GM12878 (cell line): ENCODE measurements at regions of chr22 and their contacts with region 1.

Region 1: GRCh38 chr22:22666307-22667091 is 22.1 kb downstream of the GGTLC2 start:
- DNase-seq: no peak
- ATAC-seq: peak; percentile 81
- H3K4me3 ChIP-seq: no peak overlapping the region
- H3K27ac ChIP-seq: no peak overlapping the region
- H3K4me1 ChIP-seq: peaks cover 5% of the 10 kb centered on the region; the same call in 1 of the 2 replicates
- H3K27me3 ChIP-seq: no peaks in the 10 kb centered on the region
- CTCF ChIP-seq: peak; percentile 44 to 67 (median 63)
- EP300 ChIP-seq: no peak
- POLR2A ChIP-seq: no peak
- RAD21 ChIP-seq: peak; percentile 72

Region 2: GRCh38 chr22:22479999-22480532 is 186.4 kb before region 1 on chr22:
- CTCF ChIA-PET with region 1: no interaction called
- POLR2A ChIA-PET with region 1: no interaction called
- RAD21 ChIA-PET with region 1: no interaction called
- SMC1A ChIA-PET with region 1: no interaction called
- in situ Hi-C with region 1: no loop called
- intact Hi-C with region 1: no loop called
- DNase-seq: no peak
- ATAC-seq: no peak
- H3K4me3 ChIP-seq: no peak overlapping the region
- H3K27ac ChIP-seq: no peak overlapping the region
- H3K4me1 ChIP-seq: no peaks in the 10 kb centered on the region
- H3K27me3 ChIP-seq: no peaks in the 10 kb centered on the region
- CTCF ChIP-seq: no peak
- EP300 ChIP-seq: no peak
- POLR2A ChIP-seq: no peak
- RAD21 ChIP-seq: no peak

Region 3: GRCh38 chr22:22655452-22656290 is 10.8 kb before region 1 on chr22:
- CTCF ChIA-PET with region 1: interaction called, 11 read pairs
- POLR2A ChIA-PET with region 1: no interaction called
- RAD21 ChIA-PET with region 1: interaction called, 5 read pairs
- SMC1A ChIA-PET with region 1: interaction called, 4 read pairs
- in situ Hi-C with region 1: no loop called
- intact Hi-C with region 1: no loop called
- DNase-seq: no peak
- ATAC-seq: no peak
- H3K4me3 ChIP-seq: no peak overlapping the region
- H3K27ac ChIP-seq: no peak overlapping the region
- H3K4me1 ChIP-seq: no peaks in the 10 kb centered on the region
- H3K27me3 ChIP-seq: no peaks in the 10 kb centered on the region
- CTCF ChIP-seq: no peak
- EP300 ChIP-seq: no peak
- POLR2A ChIP-seq: no peak
- RAD21 ChIP-seq: no peak

Region 4: GRCh38 chr22:22681221-22681739 is 14.8 kb after region 1 on chr22:
- CTCF ChIA-PET with region 1: interaction called, 46 read pairs
- POLR2A ChIA-PET with region 1: no interaction called
- RAD21 ChIA-PET with region 1: interaction called, 23 read pairs
- SMC1A ChIA-PET with region 1: interaction called, 23 read pairs
- in situ Hi-C with region 1: no loop called
- intact Hi-C with region 1: no loop called
- DNase-seq: no peak
- ATAC-seq: no peak
- H3K4me3 ChIP-seq: no peak overlapping the region
- H3K27ac ChIP-seq: no peak overlapping the region
- H3K4me1 ChIP-seq: peaks cover 17% of the 10 kb centered on the region
- H3K27me3 ChIP-seq: no peaks in the 10 kb centered on the region
- CTCF ChIP-seq: no peak
- EP300 ChIP-seq: no peak
- POLR2A ChIP-seq: no peak
- RAD21 ChIP-seq: no peak

Region 5: GRCh38 chr22:22687638-22688500 is 21.4 kb after region 1 on chr22:
- CTCF ChIA-PET with region 1: interaction called, 46 read pairs
- POLR2A ChIA-PET with region 1: no interaction called
- RAD21 ChIA-PET with region 1: interaction called, 23 read pairs
- SMC1A ChIA-PET with region 1: interaction called, 23 read pairs
- in situ Hi-C with region 1: no loop called
- intact Hi-C with region 1: no loop called
- DNase-seq: no peak
- ATAC-seq: peak; percentile 82
- H3K4me3 ChIP-seq: no peak overlapping the region
- H3K27ac ChIP-seq: no peak overlapping the region
- H3K4me1 ChIP-seq: peaks cover 32% of the 10 kb centered on the region
- H3K27me3 ChIP-seq: no peaks in the 10 kb centered on the region
- CTCF ChIP-seq: peak; percentile 64 to 69 (median 65); a peak in 5 of 6 replicates
- EP300 ChIP-seq: no peak
- POLR2A ChIP-seq: no peak
- RAD21 ChIP-seq: peak; percentile 38

Region 6: GRCh38 chr22:22702237-22703202 is 36.0 kb after region 1 on chr22:
- CTCF ChIA-PET with region 1: interaction called, 13 read pairs
- POLR2A ChIA-PET with region 1: no interaction called
- RAD21 ChIA-PET with region 1: interaction called, 5 read pairs
- SMC1A ChIA-PET with region 1: interaction called, 6 read pairs
- in situ Hi-C with region 1: no loop called
- intact Hi-C with region 1: no loop called
- DNase-seq: no peak
- ATAC-seq: peak; percentile 68; the same call in 2 of the 3 replicates
- H3K4me3 ChIP-seq: no peak overlapping the region
- H3K27ac ChIP-seq: no peak overlapping the region
- H3K4me1 ChIP-seq: no peaks in the 10 kb centered on the region
- H3K27me3 ChIP-seq: no peaks in the 10 kb centered on the region
- CTCF ChIP-seq: peak; percentile 18 to 48 (median 27)
- EP300 ChIP-seq: no peak
- POLR2A ChIP-seq: no peak
- RAD21 ChIP-seq: no peak

Region 7: GRCh38 chr22:23098718-23099530 is 432.4 kb after region 1 on chr22:
- CTCF ChIA-PET with region 1: no interaction called
- POLR2A ChIA-PET with region 1: no interaction called
- RAD21 ChIA-PET with region 1: no interaction called
- SMC1A ChIA-PET with region 1: no interaction called
- in situ Hi-C with region 1: no loop called
- intact Hi-C with region 1: no loop called
- DNase-seq: no peak
- ATAC-seq: no peak
- H3K4me3 ChIP-seq: no peak overlapping the region
- H3K27ac ChIP-seq: no peak overlapping the region
- H3K4me1 ChIP-seq: no peaks in the 10 kb centered on the region
- H3K27me3 ChIP-seq: no peaks in the 10 kb centered on the region
- CTCF ChIP-seq: no peak
- EP300 ChIP-seq: no peak
- POLR2A ChIP-seq: no peak
- RAD21 ChIP-seq: no peak